H1 (cell line): ENCODE measurements at regions of chr19 and their contacts with region 1.

Region 1: GRCh38 chr19:33771384-33772101 is 25.1 kb upstream of the KCTD15 start:
- DNase-seq: peak; percentile 29 to 89
- H3K4me3 ChIP-seq: no peak overlapping the region
- H3K27ac ChIP-seq: no peak overlapping the region
- H3K4me1 ChIP-seq: no peaks in the 10 kb centered on the region
- H3K27me3 ChIP-seq: no peaks in the 10 kb centered on the region
- CTCF ChIP-seq: peak; percentile 88 to 95 (median 89)
- EP300 ChIP-seq: no peak
- POLR2A ChIP-seq: no peak
- RAD21 ChIP-seq: peak; percentile 98 to 99

Region 2: DNA sequence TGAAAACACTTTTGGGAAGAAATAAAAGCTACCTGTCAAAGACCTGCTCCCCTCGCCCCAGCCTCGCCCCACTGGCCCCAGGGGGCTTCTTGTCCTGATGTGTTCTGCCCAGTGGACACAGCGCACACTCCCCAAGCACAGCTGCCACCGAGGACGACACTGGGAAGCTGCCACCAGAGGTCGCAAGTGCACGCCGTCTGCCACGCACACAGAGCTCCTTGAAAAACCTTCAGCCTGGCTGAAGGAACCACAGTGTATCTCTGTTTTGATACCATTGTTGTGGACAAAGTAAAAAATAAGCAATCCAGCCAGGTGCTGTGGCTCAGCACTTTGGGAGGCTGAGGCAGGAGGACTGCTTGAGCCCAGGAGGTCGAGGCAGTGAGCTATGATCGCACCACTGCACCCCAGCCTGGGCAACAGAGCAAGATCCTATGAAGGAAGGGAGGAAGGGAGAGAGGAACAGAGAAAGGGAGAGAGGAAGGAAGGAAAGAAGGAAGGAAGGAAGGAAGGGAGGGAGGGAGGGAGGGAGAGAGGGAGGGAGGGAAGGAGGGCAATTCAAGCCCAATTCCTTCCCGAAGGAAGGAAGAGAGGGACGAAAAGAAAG is 340.8 kb before region 1 on chr19:
- CTCF ChIA-PET with region 1: interaction called, 77 read pairs
- POLR2A ChIA-PET with region 1: no interaction called
- DNase-seq: peak; percentile 39 to 88
- H3K4me3 ChIP-seq: no peak overlapping the region
- H3K27ac ChIP-seq: no peak overlapping the region
- H3K4me1 ChIP-seq: peaks cover 0 to 3% (median 2%) of the 10 kb centered on the region in 4 experiments; a peak in 2 of 7 replicates
- H3K27me3 ChIP-seq: no peaks in the 10 kb centered on the region
- CTCF ChIP-seq: peak; percentile 87 to 99 (median 90)
- EP300 ChIP-seq: no peak
- POLR2A ChIP-seq: no peak
- RAD21 ChIP-seq: peak; percentile 89 to 90

Region 3: DNA sequence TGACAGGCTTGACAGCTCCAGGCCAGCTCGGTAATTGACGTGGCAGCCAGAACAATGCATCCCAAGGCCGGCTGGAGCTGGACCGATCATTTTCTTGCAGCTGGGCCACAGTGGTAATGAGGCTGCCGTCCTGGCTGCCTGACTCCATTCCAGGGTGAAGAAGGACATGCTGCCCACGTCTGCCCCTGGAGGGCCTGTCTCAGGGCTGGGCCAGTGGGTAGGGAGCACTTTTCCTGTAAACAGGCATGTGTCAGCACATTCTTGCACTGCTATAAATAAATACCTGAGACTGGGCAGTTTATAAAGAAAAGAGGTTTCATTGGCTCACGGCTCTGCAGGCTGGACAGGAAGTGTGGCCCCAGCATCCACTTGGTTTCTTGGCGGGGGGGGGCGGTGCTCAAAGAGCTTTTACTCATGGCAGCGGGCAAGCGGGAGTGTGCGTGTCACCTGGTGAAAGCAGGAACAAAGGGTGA is 13.0 kb before region 1 on chr19:
- CTCF ChIA-PET with region 1: interaction called, 47 read pairs
- POLR2A ChIA-PET with region 1: interaction called, 3 read pairs
- DNase-seq: no peak
- H3K4me3 ChIP-seq: no peak overlapping the region
- H3K27ac ChIP-seq: no peak overlapping the region
- H3K4me1 ChIP-seq: peaks cover 0 to 3% (median under 1%) of the 10 kb centered on the region in 4 experiments; a peak in 3 of 7 replicates
- H3K27me3 ChIP-seq: no peaks in the 10 kb centered on the region
- CTCF ChIP-seq: no peak
- EP300 ChIP-seq: no peak
- POLR2A ChIP-seq: no peak
- RAD21 ChIP-seq: no peak